BJ (cell line): ENCODE measurements at regions of chr1 and their contacts with region 1.

Region 1: GRCh38 chr1:21255278-21255942 is 34.9 kb downstream of the ECE1 start:
- DNase-seq: no peak
- H3K4me3 ChIP-seq: no peak overlapping the region
- H3K27me3 ChIP-seq: no peaks in the 10 kb centered on the region
- CTCF ChIP-seq: peak; percentile 87

Region 2: GRCh38 chr1:21106709-21107108 is 148.7 kb before region 1 on chr1:
- CTCF ChIA-PET with region 1: no interaction called
- POLR2A ChIA-PET with region 1: no interaction called
- DNase-seq: no peak
- H3K4me3 ChIP-seq: no peak overlapping the region
- H3K27me3 ChIP-seq: no peaks in the 10 kb centered on the region
- CTCF ChIP-seq: no peak

Region 3: DNA sequence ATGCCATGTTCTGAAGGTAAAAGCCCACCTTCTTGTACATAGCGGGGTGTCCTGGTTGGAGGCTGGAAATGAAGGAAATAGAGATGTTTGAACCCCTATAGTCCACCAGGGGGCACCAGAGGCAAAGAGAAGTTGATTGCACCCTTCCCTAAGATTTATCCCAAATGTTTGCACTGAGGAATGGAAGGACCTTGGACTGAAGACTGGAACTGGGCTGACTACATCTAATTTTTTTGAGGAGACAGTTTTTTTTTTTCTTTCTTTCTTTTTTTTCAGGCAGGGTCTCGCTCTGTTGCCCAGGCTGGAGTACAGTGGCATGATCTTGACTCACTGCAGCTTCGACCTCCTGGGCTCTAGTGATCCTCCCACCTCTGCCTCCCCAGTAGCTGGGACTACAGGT is 23.4 kb before region 1 on chr1:
- CTCF ChIA-PET with region 1: interaction called, 64 read pairs
- POLR2A ChIA-PET with region 1: no interaction called
- DNase-seq: no peak
- H3K4me3 ChIP-seq: no peak overlapping the region
- H3K27me3 ChIP-seq: no peaks in the 10 kb centered on the region
- CTCF ChIP-seq: peak; percentile 65

Region 4: GRCh38 chr1:21244986-21245687 is 10.3 kb before region 1 on chr1:
- CTCF ChIA-PET with region 1: interaction called, 13 read pairs
- POLR2A ChIA-PET with region 1: no interaction called
- DNase-seq: no peak
- H3K4me3 ChIP-seq: no peak overlapping the region
- H3K27me3 ChIP-seq: no peaks in the 10 kb centered on the region
- CTCF ChIP-seq: peak; percentile 50

Region 5: DNA sequence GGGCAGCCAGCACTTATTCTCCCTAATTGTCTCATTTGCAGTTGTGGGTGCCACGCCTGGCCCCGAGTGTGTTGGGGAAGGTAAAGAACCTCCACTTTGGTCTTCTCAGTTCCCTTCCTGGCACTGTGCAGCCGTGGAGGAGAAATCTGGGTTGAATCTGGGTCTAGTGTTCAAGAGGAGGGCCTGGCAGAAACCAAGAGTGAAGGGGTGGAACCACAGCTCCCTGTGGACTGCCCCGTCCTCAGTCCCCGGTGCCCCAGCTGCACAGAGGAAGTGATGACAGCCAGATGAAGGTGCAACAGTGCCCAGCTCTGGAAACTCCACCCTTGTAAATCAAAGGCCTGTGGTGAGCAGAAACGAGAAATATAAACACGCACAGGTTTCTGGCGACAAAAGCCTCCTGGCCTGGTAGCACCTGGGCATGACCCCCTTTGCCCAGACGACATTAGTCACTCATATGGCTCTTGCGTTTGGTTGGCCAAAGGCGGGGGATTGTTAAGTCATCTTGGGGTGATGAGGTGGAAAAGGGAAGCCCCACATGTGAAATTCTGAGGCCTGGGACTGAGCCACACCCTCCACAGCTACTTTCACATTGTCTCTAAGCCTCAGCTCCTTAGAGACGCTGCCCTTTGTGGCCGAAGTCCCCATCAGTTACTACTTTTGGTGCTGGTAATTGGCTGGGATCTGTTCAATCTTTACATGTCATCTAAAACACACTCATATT is 39.0 kb after region 1 on chr1:
- CTCF ChIA-PET with region 1: interaction called, 19 read pairs
- POLR2A ChIA-PET with region 1: no interaction called
- DNase-seq: no peak
- H3K4me3 ChIP-seq: no peak overlapping the region
- H3K27me3 ChIP-seq: no peaks in the 10 kb centered on the region
- CTCF ChIP-seq: no peak

Region 6: DNA sequence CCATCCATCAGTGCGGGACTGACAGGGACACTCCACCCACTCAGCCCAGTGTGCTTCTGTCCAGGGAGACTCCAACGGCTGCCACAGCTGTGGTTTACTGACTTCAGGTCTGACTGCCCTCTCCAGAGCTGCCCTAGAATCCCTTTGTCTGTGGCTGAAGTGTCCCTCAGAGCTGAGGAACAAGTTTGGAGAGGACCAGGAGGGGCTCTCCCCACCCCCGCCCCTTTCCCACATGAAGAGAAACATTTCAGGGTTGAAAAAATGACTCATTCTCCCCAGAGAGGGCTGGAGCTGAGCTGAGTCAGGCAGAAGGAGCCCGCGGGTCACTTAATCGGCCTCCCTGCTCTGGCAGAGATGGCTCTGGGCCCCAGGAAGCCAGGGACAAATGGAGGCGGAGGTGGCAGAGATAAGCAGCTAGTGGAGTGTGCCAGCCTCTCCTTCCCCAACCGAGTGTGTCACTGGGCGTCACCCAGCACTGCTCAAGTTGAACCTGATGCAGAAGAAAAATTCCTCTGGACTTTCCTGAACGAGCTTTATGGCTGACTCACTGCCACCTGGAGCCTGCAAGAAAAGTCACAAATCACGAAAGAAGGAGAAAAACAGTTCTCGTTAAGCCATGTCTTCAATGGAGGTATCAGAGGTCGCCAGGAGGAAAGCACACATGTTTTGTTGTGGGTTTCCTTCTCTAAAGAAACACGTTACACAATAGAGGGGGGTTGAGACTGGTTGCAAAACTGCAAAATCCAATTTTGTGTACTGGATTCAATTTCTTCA is 69.1 kb after region 1 on chr1:
- CTCF ChIA-PET with region 1: interaction called, 10 read pairs
- POLR2A ChIA-PET with region 1: no interaction called
- DNase-seq: peak; percentile 67
- H3K4me3 ChIP-seq: no peak overlapping the region
- H3K27me3 ChIP-seq: no peaks in the 10 kb centered on the region
- CTCF ChIP-seq: no peak

Region 7: DNA sequence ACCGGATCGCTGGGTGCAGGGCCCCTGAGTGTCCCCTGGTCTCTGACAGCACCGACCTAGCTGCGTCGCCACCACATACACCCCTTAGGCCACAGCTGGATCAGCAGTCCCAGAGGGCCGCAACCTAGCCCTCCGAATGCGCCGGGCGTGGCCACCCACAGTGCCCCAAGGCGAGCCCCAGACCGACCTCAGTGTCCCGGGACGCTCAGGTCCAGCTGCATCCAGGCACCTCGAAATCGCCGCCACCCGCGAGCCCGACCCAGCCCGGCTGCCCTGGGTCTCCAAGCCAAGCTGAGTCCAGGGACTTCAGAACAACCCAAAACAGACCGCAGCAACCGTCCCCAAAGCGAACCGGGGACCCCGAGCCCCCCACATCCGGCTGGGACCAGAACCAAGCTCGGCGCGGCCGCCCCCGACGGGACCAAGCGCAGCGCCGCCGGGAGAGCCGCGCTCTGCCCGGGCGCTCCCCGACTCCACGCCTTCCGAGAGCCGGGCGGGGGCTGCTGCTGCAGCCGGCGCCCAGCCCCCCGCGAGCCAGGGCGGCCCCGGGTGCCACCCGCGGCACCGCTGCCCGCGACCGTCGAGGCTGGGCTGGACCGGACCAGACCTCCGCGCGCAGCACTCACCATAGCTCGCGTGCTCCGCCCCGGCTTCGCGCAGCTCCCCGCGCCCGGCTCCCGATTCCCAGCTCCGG is 89.5 kb after region 1 on chr1:
- CTCF ChIA-PET with region 1: interaction called, 15 read pairs
- POLR2A ChIA-PET with region 1: no interaction called
- DNase-seq: no peak
- H3K4me3 ChIP-seq: peak overlapping the region; percentile 85
- H3K27me3 ChIP-seq: no peaks in the 10 kb centered on the region
- CTCF ChIP-seq: no peak

Region 8: DNA sequence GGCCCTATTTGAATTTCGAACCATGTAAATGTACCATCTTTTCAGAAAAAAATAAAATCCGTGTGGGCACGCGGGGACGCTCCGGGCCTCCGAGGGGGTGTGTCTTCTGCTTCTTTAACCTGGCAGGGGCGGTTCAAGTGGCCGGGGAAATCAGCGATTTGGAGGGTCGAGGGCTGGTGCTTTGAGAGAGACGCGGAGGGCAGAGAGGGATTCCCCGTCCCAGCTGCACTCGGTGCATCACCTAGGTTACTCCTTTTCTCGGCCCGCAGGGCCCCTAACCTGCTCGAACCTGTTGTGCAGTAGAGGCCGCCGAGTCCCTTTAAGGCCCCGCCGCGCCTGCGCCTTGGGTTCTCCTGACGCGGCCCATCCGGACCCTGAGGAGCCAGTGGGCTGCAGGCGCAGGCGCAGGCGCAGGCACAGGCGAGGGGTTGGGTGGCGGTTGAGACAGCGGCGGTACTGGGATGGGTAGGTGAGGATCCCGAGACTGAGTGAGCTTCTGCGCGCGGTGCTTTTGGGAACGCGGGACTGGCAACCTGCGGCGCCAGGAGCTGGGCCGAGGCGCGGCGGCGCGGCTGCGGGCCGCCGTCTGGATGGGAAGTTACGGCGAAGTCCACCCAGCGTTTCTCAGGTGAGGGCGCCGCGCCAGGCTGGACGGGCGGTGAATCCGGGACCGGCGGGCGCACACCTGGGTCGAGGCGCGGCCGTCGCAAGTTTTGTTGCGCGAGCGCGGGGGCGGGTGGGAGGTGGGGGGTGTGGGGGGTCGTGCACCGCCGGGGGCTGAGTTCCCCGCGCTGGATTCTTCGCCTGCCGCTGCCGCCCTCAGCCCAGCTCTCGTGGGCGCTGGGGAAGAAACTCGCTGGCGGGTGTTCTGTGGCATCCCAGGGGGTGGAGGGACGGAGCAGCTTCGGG is 184.6 kb after region 1 on chr1 and contains the start of gene NBPF3:
- CTCF ChIA-PET with region 1: no interaction called
- POLR2A ChIA-PET with region 1: no interaction called
- DNase-seq: peak; percentile 45
- H3K4me3 ChIP-seq: peak within 1 kb of the TSS; percentile 91
- H3K27me3 ChIP-seq: no peaks in the 10 kb centered on the region
- CTCF ChIP-seq: no peak
- polyA plus RNA-seq, gene NBPF3: 17.1 and 17.8 TPM in 2 replicates

Region 9: DNA sequence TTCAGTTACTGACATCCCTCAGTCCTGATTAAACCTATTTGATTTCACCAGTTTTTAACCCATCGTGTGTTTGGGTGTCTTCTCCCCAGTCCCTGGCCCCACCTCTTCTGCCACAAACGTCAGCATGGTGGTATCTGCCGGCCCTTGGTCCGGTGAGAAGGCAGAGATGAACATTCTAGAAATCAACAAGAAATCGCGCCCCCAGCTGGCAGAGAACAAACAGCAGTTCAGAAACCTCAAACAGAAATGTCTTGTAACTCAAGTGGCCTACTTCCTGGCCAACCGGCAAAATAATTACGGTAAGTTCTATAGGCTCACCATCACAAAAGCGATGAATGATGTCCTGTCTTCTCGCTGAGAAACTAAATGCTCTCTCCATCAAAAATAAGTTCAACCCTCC is 213.2 kb after region 1 on chr1:
- CTCF ChIA-PET with region 1: no interaction called
- POLR2A ChIA-PET with region 1: no interaction called
- DNase-seq: no peak
- H3K4me3 ChIP-seq: no peak overlapping the region
- H3K27me3 ChIP-seq: no peaks in the 10 kb centered on the region
- CTCF ChIP-seq: peak; percentile 52